HEK293 (cell line): ENCODE measurements at regions of chr6 and their contacts with region 1.

Region 1: GRCh38 chr6:110958329-110959192 is at the start of gene GTF3C6:
- H3K4me3 ChIP-seq: peak within 1 kb of the TSS; percentile 95
- H3K27ac ChIP-seq: peak within 1 kb of the TSS; percentile 77
- H3K4me1 ChIP-seq: no peaks in the 10 kb centered on the region
- CTCF ChIP-seq: peak; percentile 53; the same call in 1 of the 2 replicates

Region 2: DNA sequence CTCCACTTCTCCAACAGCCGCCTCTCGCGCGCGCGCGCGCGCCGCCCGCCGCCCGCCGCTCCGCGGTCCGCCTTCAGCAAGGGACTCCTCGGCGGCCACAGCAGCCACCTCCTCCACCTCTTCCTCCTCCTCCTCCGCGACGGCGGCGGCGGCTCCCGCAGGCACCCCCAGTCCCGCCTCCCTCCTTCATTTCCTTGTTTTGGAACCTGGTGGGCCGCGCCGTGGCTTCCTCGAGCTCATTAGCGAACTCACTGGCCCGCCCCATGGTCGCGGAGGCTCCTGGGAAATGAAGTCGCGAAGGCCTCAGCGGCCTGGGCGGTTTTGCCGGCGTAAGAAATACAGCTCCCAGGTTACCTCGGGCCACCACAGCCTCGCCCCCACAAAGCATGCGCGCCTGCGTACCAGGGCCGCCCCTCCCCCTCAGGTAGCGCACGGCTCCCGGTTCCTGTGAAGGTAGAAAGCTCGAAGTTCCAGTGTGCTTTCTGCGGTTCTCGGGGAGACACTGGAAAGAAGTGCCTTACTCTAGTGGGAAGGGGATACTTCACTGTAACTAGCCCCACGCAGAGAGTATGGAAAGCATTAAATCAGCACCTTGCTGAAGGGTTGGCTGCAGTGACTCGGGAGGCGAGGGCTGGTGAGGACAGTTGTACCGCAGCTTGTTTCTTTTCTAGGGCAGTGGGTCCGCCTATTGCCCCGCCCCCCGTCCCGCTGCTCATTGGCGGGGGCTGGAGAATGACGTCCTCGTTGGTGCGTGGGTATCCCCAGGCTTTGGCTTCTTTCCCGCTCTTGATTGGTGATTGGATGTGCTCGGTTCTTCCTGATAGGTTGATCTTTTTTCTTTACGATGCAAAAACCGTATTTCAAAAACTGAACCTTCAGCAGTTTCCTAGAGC is 143.1 kb before region 1 on chr6 and contains the start of gene CDK19:
- CTCF ChIA-PET with region 1: no interaction called
- POLR2A ChIA-PET with region 1: interaction called, 24 read pairs
- H3K4me3 ChIP-seq: peak within 1 kb of the TSS; percentile 95
- H3K27ac ChIP-seq: peak within 1 kb of the TSS; percentile 79
- H3K4me1 ChIP-seq: peaks cover 10% of the 10 kb centered on the region; the same call in 1 of the 2 replicates
- CTCF ChIP-seq: no peak

Region 3: GRCh38 chr6:110944681-110945151 is 13.8 kb before region 1 on chr6:
- CTCF ChIA-PET with region 1: interaction called, 5 read pairs
- POLR2A ChIA-PET with region 1: interaction called, 10 read pairs
- H3K4me3 ChIP-seq: no peak overlapping the region
- H3K27ac ChIP-seq: no peak overlapping the region
- H3K4me1 ChIP-seq: no peaks in the 10 kb centered on the region
- CTCF ChIP-seq: no peak

Region 4: GRCh38 chr6:110971468-110971867 is 12.9 kb after region 1 on chr6:
- CTCF ChIA-PET with region 1: no interaction called
- POLR2A ChIA-PET with region 1: interaction called, 16 read pairs
- H3K4me3 ChIP-seq: no peak overlapping the region
- H3K27ac ChIP-seq: no peak overlapping the region
- H3K4me1 ChIP-seq: no peaks in the 10 kb centered on the region
- CTCF ChIP-seq: no peak

Region 5: GRCh38 chr6:110981202-110981600 is 22.6 kb after region 1 on chr6:
- CTCF ChIA-PET with region 1: interaction called, 3 read pairs
- POLR2A ChIA-PET with region 1: interaction called, 27 read pairs
- H3K4me3 ChIP-seq: peak overlapping the region; percentile 97
- H3K27ac ChIP-seq: no peak overlapping the region; the same call in 1 of the 2 replicates
- H3K4me1 ChIP-seq: 0 out of 2 replicates have a peak, but pooled peaks cover 4% of the 10 kb centered on the region
- CTCF ChIP-seq: no peak

Region 6: DNA sequence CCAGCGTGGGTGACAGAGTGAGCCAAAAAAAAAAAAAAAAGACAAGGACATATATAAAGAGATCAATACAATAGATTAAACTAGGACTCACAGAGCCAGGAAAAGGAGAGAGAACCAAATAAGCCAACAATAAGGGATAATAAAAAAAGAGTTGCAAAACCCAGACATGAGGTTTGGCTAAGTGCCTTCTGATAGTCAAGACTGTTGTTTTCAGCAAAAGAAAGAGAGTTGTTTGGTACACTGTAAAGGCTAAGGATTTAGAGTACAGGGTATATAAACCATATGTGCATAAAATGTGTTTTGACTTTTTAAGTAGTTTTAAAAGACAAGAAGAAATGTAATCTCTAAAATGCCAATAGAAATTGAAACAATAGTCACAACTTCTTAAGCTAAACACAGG is 66.1 kb after region 1 on chr6:
- CTCF ChIA-PET with region 1: no interaction called
- POLR2A ChIA-PET with region 1: no interaction called
- H3K4me3 ChIP-seq: no peak overlapping the region
- H3K27ac ChIP-seq: no peak overlapping the region
- H3K4me1 ChIP-seq: no peaks in the 10 kb centered on the region
- CTCF ChIP-seq: no peak